Colonic mucosa (tissue), 4 donors: ENCODE measurements at regions of chr2 and their contacts with region 1.

Region 1: DNA sequence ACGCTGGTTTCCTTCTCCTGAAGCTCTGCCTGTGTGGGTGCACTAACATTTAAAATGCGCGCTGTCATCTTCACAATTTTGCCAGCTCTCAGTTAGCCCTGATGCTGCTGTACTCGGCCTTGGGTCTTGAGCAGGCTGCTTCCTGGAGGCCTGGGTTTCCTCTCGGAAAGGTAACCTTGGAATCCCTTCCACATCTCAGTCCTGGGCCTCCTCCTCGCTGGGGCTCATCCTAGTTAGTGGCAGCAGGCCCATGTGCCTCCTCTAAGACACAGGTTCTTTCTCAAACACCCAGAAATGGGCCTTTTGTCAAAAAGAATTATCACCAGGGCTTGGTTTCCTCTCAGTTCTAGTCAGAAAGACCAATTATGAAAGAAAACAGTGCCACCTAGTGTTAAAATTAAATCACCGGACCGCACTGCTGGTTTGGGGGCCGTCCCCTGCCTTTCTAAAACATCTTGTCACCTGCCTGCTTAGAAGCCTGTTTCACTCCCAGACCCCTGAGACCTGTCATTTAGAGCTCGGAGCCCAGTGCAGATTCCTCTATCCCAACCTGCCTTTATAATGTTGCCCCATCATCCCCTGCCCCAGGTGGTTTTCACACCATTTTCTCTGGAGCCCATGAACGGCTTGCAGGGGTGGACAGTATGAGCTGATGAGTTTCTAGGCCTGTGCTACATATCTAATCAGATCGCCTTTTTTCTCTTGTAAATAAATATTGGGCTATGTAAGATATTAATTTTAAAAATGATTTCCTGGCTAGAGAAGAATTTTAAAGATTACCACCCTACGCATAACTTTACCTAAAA is 42.4 kb downstream of the HK2 start:
- DNase-seq: peak; percentile 54
- H3K4me3 ChIP-seq: no peak overlapping the region
- H3K27ac ChIP-seq: peak overlapping the region; percentile 13
- H3K4me1 ChIP-seq: peaks cover 3% of the 10 kb centered on the region
- H3K27me3 ChIP-seq: no peaks in the 10 kb centered on the region
- CTCF ChIP-seq: peak; percentile 51

Region 2: GRCh38 chr2:74482801-74483674 is 393.2 kb before region 1 on chr2 and contains the starts of genes CCDC142 and TTC31:
- intact Hi-C with region 1: loop called (anchors 10 kb)
- DNase-seq: peak; percentile 97
- H3K4me3 ChIP-seq: peak within 1 kb of the TSS; percentile 86
- H3K27ac ChIP-seq: peak within 1 kb of the TSS; percentile 91
- H3K4me1 ChIP-seq: peaks cover 16% of the 10 kb centered on the region
- H3K27me3 ChIP-seq: no peaks in the 10 kb centered on the region
- CTCF ChIP-seq: peak; percentile 73
- total RNA-seq, gene CCDC142: 14.5 to 28.3 TPM
- total RNA-seq, gene TTC31: 23.3 to 25.2 TPM

Region 3: DNA sequence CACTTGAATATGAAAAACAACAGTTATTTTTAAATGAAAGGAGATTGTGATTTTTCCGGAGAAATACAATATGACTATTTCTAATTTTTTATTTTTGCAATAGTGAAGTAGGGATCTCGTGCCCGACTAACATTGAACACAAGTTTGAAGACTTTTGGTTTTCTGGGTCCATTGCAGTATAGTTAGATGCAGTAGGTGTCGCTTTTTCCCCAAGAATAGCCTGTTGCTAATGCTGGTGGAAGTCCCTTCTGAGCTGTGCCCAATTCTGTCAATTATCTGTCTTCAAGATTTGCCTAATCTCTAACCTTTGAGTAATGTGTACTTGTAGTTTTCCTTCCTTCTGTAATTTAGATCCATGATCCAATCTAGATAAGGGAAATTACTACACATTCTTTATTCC is 185.7 kb before region 1 on chr2:
- intact Hi-C with region 1: loop called (anchors 2 kb)
- DNase-seq: peak; percentile 63
- H3K4me3 ChIP-seq: no peak overlapping the region
- H3K27ac ChIP-seq: no peak overlapping the region
- H3K4me1 ChIP-seq: peaks cover 11% of the 10 kb centered on the region
- H3K27me3 ChIP-seq: no peaks in the 10 kb centered on the region
- CTCF ChIP-seq: peak; percentile 67

Region 4: GRCh38 chr2:74715078-74715791 is 161.0 kb before region 1 on chr2:
- intact Hi-C with region 1: loop called (anchors 2 kb)
- DNase-seq: peak; percentile 91
- H3K4me3 ChIP-seq: peak overlapping the region; percentile 61
- H3K27ac ChIP-seq: peak overlapping the region; percentile 84
- H3K4me1 ChIP-seq: no peaks in the 10 kb centered on the region
- H3K27me3 ChIP-seq: no peaks in the 10 kb centered on the region
- CTCF ChIP-seq: peak; percentile 90

Region 5: DNA sequence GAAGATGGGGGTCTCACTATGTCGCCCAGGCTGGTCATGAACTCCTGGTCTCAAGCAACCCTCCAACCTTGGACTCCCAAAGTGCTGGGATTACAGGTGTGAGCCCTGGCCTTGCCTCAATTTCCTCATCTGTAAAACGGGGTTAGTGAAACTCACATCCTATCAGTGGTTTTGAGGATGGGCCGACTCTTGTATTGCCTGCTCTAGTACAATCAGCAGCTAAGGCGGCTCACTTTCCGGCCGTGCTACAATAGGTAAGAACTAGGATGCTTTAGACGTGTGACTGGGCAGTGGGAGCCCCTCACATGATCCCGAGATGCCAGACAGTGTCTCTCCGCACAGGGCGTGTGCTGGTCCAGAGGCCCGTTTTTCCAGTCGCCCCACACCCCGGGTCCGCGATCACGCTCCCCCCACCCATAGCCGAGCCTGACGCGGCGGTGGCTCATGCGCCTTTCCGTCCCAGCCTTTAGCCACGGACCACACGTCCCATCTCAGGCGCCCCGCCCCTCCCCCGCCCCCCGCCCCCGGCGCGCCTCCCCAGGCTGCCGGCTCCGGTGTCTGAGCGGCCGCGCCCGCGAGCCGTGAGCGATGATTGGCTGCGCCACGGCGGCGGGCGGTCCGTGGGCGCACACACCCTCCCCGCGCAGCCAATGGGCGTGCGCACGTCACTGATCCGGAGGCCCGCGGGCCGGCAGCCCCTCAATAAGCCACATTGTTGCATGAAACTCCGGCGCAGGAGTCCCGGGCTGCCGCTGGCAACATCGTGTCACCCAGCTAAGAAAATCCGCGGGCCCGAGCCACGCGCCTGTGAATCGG is 42.7 kb before region 1 on chr2 and contains the start of gene HK2:
- intact Hi-C with region 1: loop called (anchors 5 kb)
- DNase-seq: peak; percentile 91
- H3K4me3 ChIP-seq: peak within 1 kb of the TSS; percentile 77
- H3K27ac ChIP-seq: peak within 1 kb of the TSS; percentile 80
- H3K4me1 ChIP-seq: no peaks in the 10 kb centered on the region
- H3K27me3 ChIP-seq: no peaks in the 10 kb centered on the region
- CTCF ChIP-seq: no peak
- total RNA-seq, gene HK2: 162 to 396 TPM